ENCODE measurements at regions of chr13 and their contacts with region 1.

Region 1: GRCh38 chr13:36919833-36920615 is at the start of gene SMAD9:
- DNase-seq: peak; percentile 58
- H3K4me3 ChIP-seq: peak within 1 kb of the TSS; percentile 82 to 97 (median 92)
- H3K27ac ChIP-seq: peak within 1 kb of the TSS; percentile 69
- H3K4me1 ChIP-seq: peaks cover 11% of the 10 kb centered on the region
- H3K27me3 ChIP-seq: no peaks in the 10 kb centered on the region
- CTCF ChIP-seq: no peak
- POLR2A ChIP-seq: no peak
- total RNA-seq, gene SMAD9: 4.2 and 4.5 TPM in 2 replicates

Region 2: DNA sequence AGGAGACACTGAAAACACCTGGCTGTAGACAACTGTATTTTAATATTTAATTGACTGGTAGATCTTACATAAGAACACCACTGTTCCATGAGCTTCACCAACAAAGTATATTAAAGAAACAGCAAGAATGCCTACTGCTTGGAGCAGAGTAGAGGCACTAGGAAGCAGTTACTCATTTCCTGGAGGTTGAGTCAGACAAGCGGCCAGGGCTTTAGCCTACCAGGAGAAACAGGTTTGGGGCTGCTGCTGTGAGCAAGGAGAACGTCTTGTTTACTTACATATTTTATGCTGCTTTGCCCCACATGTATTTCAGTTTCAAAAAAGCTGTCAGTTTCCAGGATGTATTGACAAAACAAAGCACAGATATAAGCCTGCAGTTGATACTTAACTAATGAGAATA is 45.7 kb after region 1 on chr13:
- CTCF ChIA-PET with region 1: no interaction called
- POLR2A ChIA-PET with region 1: no interaction called
- dilution Hi-C with region 1: no loop called
- intact Hi-C with region 1: loop called (anchors 1 kb)
- DNase-seq: peak; percentile 95
- H3K4me3 ChIP-seq: no peak overlapping the region
- H3K27ac ChIP-seq: peak overlapping the region; percentile 93
- H3K4me1 ChIP-seq: peaks cover 33% of the 10 kb centered on the region
- H3K27me3 ChIP-seq: no peaks in the 10 kb centered on the region
- CTCF ChIP-seq: no peak
- POLR2A ChIP-seq: no peak

Region 3: DNA sequence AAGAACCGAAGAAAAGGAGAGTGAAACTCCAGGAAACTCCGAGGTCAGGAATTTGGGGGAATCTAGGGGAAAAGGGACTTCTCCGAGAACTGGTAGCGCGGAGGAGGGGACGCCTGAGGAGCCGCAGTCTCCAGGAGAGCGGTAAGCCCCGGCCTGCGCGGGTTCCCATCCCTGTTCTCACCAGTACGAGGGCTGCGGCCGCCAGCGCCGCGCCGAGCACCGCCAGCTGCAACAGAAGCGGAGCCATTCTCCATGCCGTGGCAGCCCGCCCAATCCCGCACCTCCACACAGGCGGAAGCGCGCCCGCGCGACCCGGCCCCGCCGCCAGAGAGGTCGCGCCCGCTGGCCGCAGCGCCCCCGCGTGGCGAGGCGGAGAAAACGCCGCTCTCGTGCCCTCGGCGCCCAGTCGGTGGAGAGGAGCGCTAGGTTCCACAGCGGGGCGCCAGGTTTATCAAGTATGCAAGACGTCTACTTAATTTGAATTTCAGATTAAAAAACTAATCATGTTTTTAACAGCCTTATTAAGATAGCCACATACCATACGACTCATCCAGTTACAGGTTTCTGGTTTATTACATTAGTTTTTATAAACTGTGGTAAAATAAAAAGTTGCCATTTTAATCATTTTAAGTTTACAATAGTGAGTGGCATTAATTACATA is 79.2 kb after region 1 on chr13 and contains the start of gene ALG5:
- CTCF ChIA-PET with region 1: no interaction called
- POLR2A ChIA-PET with region 1: no interaction called
- dilution Hi-C with region 1: no loop called
- intact Hi-C with region 1: loop called (anchors 2 kb)
- DNase-seq: peak; percentile 94
- H3K4me3 ChIP-seq: peak within 1 kb of the TSS; percentile 89 to 97 (median 94)
- H3K27ac ChIP-seq: peak within 1 kb of the TSS; percentile 94
- H3K4me1 ChIP-seq: peaks cover 21% of the 10 kb centered on the region
- H3K27me3 ChIP-seq: no peaks in the 10 kb centered on the region
- CTCF ChIP-seq: peak; percentile 81 to 99
- POLR2A ChIP-seq: peak; percentile 94
- total RNA-seq, gene ALG5: 29.3 and 31.3 TPM in 2 replicates